HEK293T (cell line): ENCODE measurements at regions of chr2 and their contacts with region 1.

Region 1: DNA sequence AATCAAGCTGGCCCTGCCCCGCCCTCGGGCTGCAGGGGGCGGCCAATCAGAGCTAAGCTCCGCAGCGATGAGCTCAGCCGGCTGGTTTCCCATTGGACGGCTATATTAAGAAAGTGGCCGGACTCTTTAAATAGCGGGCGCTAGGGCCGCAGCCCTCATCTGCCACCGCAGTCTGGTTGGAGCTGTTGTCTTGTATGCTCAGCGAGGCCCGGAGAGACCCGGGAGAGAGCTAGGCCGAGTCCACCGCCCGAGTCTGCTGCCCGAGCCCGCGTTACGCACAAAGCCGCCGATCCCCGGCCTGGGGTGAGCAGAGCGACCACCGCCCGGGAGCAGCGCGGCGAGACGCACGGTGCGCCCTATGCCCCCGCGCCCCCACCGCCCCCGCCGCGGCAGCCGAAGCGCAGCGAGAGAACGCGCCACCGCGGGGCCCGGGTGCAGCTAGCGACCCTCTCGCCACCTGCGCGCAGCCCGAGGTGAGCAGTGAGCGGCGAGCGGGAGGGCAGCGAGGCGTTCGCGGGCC is at the start of gene RHOB:
- DNase-seq: peak; percentile 98

Region 2: GRCh38 chr2:19632403-19632991 is 814.5 kb before region 1 on chr2:
- CTCF ChIA-PET with region 1: no interaction called
- POLR2A ChIA-PET with region 1: no interaction called
- DNase-seq: no peak

Region 3: DNA sequence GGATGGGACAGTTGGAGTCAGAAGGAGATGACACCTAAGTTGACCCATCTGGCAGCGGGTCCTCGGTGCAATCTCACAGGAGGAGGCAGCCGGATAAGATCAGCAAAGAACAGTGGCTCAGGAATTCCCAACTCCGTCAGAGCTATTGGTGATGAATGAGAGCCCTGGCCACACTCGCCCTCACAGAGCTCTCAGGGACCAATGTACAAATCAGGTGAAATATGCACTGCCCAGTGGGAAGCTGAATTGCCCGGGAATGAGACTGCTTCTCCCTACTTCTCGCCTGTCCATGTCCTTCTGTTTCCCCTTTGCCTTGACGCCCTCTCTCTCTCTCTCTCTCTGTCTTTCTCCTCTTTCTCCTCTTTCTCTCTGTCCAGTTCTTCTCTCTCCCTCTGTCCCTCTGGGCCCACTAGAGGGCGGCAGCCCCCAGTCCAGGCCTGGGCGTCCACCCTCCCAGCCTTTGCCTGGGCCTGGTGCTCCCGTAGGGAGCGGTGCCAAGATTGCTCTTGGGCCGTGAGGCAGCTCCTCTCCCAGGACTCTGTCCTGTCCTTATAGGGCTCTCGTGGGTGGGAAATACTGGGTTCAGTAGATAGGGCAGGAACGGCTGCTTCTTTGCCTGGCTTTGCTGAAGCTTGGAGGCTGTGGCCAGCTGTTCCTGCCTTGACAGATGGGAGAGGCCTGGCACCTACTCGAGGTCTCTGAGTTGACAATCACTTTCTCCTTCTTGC is 68.0 kb before region 1 on chr2:
- CTCF ChIA-PET with region 1: interaction called, 3 read pairs
- POLR2A ChIA-PET with region 1: interaction called, 32 read pairs
- DNase-seq: peak; percentile 71

Region 4: GRCh38 chr2:20485221-20486074 is 38.5 kb after region 1 on chr2:
- CTCF ChIA-PET with region 1: interaction called, 3 read pairs
- POLR2A ChIA-PET with region 1: interaction called, 16 read pairs
- DNase-seq: no peak

Region 5: DNA sequence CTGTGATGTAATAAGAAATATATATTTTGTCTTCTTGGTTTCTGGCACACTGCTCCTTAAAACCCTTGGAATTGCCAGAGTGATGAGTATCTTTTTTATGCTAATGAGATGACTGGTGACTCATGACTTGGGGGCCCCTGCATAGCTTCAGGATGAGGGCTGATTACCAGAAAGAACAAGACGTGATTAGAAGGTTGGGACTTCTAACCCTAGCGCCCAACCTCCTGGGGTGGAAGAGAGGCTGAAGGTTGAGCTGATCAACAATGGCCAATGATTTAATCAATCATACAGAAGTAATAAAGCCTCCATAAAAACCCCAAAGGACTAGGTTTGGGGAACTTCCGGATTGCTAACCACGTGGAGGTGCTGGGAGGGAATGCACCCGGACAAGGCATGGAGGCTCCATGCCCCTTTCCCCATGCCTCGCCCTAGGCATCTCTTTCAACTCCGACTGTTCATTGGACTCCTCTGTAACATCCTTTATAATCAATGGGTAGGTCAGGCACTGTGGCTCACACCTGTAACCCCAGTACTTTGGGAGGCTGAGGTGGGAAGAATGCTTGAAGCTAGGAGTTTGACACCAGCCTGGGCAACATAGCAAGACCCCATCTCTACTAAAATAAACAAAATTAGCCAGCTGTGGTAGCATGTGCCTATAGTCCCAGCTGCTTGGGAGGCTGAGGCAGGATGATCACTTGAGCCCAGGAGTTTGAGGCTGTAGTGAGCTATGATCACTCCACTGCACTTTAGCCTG is 114.9 kb after region 1 on chr2:
- CTCF ChIA-PET with region 1: no interaction called
- POLR2A ChIA-PET with region 1: interaction called, 29 read pairs
- DNase-seq: no peak

Region 6: GRCh38 chr2:20595431-20596192 is 148.6 kb after region 1 on chr2:
- CTCF ChIA-PET with region 1: interaction called, 4 read pairs
- POLR2A ChIA-PET with region 1: interaction called, 77 read pairs
- DNase-seq: no peak

Region 7: GRCh38 chr2:20635675-20636584 is 189.0 kb after region 1 on chr2:
- CTCF ChIA-PET with region 1: interaction called, 24 read pairs
- POLR2A ChIA-PET with region 1: interaction called, 99 read pairs
- DNase-seq: peak; percentile 89

Region 8: DNA sequence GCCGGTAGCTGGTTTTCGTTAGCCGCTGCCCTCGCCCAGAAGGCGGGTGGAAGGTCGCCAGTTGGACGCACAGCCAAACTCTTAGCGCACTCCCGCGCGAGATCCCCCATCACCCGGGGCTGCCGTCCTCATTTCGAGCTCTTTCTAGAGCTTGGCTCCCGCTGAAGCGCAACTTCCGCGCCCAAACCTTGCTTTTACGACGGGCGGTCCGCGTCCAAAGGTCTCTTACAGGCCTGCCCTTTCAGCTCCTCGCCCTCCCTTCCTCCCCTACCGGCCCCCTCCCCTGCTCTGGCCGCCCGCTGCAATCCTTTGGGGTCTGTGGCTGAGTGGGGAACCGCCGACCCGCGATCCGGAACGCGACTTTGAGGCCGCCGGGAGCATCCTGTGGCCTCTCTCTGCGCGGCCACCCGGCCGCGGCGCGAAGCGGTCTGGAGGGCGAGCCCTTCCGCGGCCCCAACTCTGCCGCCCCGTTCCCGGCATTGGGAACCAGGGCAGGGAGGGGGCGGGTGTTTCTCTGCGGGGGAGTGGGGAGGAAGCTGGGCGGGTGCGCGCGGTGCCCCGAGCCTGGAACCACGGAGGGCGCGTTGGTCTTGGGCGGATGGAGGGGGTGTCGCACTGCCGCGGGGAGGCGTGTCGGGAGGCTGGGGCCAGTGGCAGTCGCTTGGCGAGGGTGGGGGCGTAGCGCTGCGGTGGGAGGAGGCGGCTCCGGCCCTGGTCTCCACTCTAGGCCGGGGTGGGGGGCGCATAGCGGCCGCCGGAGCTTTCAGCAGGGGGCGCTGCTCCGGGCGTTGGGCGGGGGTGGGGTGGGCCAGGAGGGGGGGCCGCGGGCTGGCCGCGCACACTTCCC is 219.6 kb after region 1 on chr2 and contains the start of gene GDF7:
- CTCF ChIA-PET with region 1: no interaction called
- POLR2A ChIA-PET with region 1: no interaction called
- DNase-seq: peak; percentile 80

Region 9: GRCh38 chr2:21047141-21048009 is 600.4 kb after region 1 on chr2:
- CTCF ChIA-PET with region 1: no interaction called
- POLR2A ChIA-PET with region 1: no interaction called
- DNase-seq: no peak